ENCODE measurements at regions of chr3 and their contacts with region 1.

Region 1: GRCh38 chr3:4350789-4351163 is 47.6 kb downstream of the SETMAR start:
- DNase-seq: peak; percentile 53
- H3K4me3 ChIP-seq: no peak overlapping the region
- H3K27ac ChIP-seq: no peak overlapping the region
- H3K4me1 ChIP-seq: no peaks in the 10 kb centered on the region
- H3K27me3 ChIP-seq: no peaks in the 10 kb centered on the region
- CTCF ChIP-seq: peak; percentile 57 to 87 (median 64)
- POLR2A ChIP-seq: no peak

Region 2: DNA sequence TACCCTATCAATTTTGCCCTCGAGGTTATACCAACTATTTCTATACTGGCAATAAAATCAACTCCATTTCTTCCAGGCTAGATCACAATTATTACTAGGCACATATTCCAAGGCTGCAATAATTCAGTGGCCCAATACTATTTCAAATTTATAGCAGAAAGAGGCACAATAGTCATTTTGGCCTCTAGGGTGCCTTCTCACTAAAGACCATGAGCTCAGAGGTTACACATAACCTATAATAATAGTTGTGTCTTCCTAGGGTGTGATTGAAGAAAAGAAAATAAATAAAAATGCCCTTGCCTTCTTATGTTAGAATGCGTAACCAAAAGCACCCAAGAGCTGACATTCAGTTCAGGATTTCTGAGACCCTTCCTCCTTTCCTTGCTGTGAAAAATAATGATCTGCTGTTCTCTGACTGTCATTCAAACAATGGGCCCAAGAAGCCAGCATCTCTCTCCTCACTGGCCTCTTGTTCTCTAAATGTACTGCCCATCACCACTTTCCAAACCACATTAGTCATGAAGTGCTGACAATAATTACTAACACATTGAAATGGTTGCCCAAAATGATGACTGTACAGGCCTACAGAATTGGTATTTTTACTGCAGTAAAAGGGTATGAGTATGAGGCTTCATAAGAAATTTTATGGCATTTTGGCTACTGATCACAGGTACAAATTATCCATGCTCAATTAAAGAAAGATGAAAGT is 306.8 kb before region 1 on chr3:
- intact Hi-C with region 1: no loop called
- DNase-seq: no peak
- H3K4me3 ChIP-seq: no peak overlapping the region
- H3K27ac ChIP-seq: no peak overlapping the region
- H3K4me1 ChIP-seq: no peaks in the 10 kb centered on the region
- H3K27me3 ChIP-seq: no peaks in the 10 kb centered on the region
- CTCF ChIP-seq: no peak
- POLR2A ChIP-seq: no peak

Region 3: GRCh38 chr3:4584456-4585249 is 233.9 kb after region 1 on chr3:
- intact Hi-C with region 1: loop called (anchors 2 kb)
- DNase-seq: no peak
- H3K4me3 ChIP-seq: peak overlapping the region in 1 of 2 donors; percentile 11
- H3K27ac ChIP-seq: peak overlapping the region; percentile 62 to 67
- H3K4me1 ChIP-seq: no peaks in the 10 kb centered on the region
- H3K27me3 ChIP-seq: no peaks in the 10 kb centered on the region
- CTCF ChIP-seq: peak in 2 of 4 experiments; percentile 11 to 26
- POLR2A ChIP-seq: no peak

Region 4: DNA sequence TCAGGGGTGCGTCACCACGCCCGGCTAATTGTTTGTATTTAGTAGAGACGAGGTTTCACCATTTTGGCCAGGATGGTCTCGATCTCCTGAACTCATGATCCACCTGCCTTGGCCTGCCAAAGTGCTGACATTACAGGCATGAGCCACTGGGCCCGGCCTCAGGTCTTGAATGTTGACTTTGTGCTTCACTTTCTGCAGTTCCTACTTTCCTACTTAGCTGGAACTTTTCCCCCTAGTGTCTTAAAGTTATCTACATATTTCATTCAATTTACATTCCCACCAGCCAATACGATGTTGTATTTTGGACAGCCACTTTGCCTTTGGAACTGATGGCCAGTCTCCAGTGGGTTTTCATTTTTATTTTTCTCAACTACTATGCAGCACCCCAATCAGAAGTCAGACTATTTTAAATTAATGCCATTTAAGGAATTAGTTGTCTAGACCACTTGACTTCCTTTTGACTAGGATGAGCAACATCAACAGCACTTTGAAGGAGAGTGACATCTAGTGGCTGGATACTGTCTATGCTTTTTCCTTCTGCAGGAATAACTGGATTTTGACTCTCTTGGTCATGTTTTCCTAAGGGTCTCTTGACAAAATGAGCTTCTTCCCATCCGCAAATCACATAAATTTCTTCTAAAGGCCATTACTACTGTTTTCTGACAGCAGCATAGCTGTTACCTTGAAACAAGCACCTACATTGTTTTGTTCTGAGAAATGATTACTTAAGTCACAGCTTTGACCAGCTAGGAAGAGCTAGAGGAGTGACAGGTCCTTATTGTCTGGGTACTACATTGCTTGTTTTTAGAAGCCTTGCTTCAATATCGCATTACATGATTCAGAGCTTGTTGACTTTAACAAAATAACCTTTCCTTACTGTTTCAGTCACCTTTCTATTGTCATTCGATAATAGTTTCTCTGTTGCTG is 282.6 kb after region 1 on chr3:
- intact Hi-C with region 1: loop called (anchors 5 kb)
- DNase-seq: no peak
- H3K4me3 ChIP-seq: no peak overlapping the region
- H3K27ac ChIP-seq: no peak overlapping the region
- H3K4me1 ChIP-seq: no peaks in the 10 kb centered on the region
- H3K27me3 ChIP-seq: no peaks in the 10 kb centered on the region
- CTCF ChIP-seq: peak; percentile 75 to 83 (median 78)
- POLR2A ChIP-seq: no peak